ENCODE measurements at regions of chr3 and their contacts with region 1.

Region 1: GRCh38 chr3:113514265-113514769 is 639 bp downstream of the SPICE1 start:
- DNase-seq: no peak
- ATAC-seq: peak; percentile 9
- H3K4me3 ChIP-seq: peak overlapping the region; percentile 87
- H3K27ac ChIP-seq: peak overlapping the region; percentile 76
- H3K4me1 ChIP-seq: peaks cover 12% of the 10 kb centered on the region
- H3K27me3 ChIP-seq: no peaks in the 10 kb centered on the region
- CTCF ChIP-seq: no peak
- EP300 ChIP-seq: 0 out of 4 replicates have a peak, but pooled peaks of 1 of the 2 experiments have one; percentile 35
- POLR2A ChIP-seq: no peak
- RAD21 ChIP-seq: no peak

Region 2: DNA sequence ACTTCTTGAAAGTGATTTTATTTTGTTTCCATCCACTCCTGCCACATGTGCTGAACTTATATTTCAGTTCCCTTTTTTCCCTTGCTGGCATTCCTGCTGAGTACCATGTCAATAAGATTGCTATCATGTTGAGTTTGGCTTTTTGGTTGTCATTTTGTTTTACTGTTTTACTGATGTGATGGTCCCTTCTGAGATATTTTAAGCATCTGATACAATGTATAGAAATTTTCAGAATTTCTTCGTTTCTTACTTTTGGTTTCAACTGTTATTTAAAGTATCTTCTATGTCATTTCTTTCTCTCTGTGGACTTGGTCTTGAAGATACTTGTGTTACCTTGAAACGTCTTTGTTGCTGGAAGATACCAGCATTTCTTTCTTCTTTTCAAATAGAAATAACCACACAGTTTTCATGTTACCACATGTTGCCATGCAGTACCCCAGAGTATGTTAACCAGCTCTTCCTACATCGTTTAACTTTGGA is 32.1 kb after region 1 on chr3:
- CTCF ChIA-PET with region 1: interaction called, 11 read pairs
- POLR2A ChIA-PET with region 1: interaction called, 13 read pairs
- RAD21 ChIA-PET with region 1: interaction called, 11 read pairs
- SMC1A ChIA-PET with region 1: interaction called, 10 read pairs
- in situ Hi-C with region 1: no loop called
- intact Hi-C with region 1: no loop called
- DNase-seq: peak; percentile 57
- ATAC-seq: peak; percentile 88
- H3K4me3 ChIP-seq: peak overlapping the region; percentile 52; the same call in 1 of the 2 replicates
- H3K27ac ChIP-seq: peak overlapping the region; percentile 76
- H3K4me1 ChIP-seq: peaks cover 26% of the 10 kb centered on the region
- H3K27me3 ChIP-seq: no peaks in the 10 kb centered on the region
- CTCF ChIP-seq: no peak
- EP300 ChIP-seq: 0 out of 4 replicates have a peak, but pooled peaks of 1 of the 2 experiments have one; percentile 39
- POLR2A ChIP-seq: no peak
- RAD21 ChIP-seq: no peak

Region 3: DNA sequence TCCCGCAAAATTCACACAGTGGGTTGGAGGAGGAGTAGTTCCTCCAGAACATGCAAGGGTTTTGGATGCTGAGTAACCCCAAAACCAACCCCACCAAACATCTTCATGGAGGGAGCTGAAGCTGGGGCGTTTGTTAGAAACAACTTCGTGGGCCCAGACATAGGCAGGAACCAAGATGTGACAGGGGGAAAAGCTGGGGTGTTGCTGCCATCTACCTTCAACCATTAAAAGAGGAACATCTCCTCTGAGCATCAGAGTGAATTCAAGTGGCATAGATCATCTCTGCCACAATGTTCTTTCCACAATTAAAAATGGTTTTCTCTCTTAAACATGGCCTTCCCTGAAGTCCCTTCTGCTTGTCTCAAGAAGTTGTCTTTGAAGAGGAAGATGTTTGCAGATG is 38.5 kb after region 1 on chr3:
- CTCF ChIA-PET with region 1: interaction called, 28 read pairs
- POLR2A ChIA-PET with region 1: interaction called, 13 read pairs
- RAD21 ChIA-PET with region 1: interaction called, 5 read pairs
- SMC1A ChIA-PET with region 1: interaction called, 15 read pairs
- in situ Hi-C with region 1: no loop called
- intact Hi-C with region 1: no loop called
- DNase-seq: no peak
- ATAC-seq: peak; percentile 85
- H3K4me3 ChIP-seq: no peak overlapping the region
- H3K27ac ChIP-seq: no peak overlapping the region; the same call in 1 of the 2 replicates
- H3K4me1 ChIP-seq: peaks cover 4% of the 10 kb centered on the region
- H3K27me3 ChIP-seq: no peaks in the 10 kb centered on the region
- CTCF ChIP-seq: peak in 2 of 3 experiments; percentile 24 to 67; a peak in 3 of 6 replicates
- EP300 ChIP-seq: no peak
- POLR2A ChIP-seq: no peak
- RAD21 ChIP-seq: peak; percentile 80

Region 4: GRCh38 chr3:113560831-113561623 is 46.7 kb after region 1 on chr3:
- CTCF ChIA-PET with region 1: interaction called, 4 read pairs
- POLR2A ChIA-PET with region 1: interaction called, 11 read pairs
- RAD21 ChIA-PET with region 1: interaction called, 3 read pairs
- SMC1A ChIA-PET with region 1: interaction called, 15 read pairs
- in situ Hi-C with region 1: no loop called
- intact Hi-C with region 1: no loop called
- DNase-seq: no peak
- ATAC-seq: no peak
- H3K4me3 ChIP-seq: no peak overlapping the region
- H3K27ac ChIP-seq: no peak overlapping the region
- H3K4me1 ChIP-seq: no peaks in the 10 kb centered on the region; the same call in 1 of the 2 replicates
- H3K27me3 ChIP-seq: no peaks in the 10 kb centered on the region
- CTCF ChIP-seq: no peak
- EP300 ChIP-seq: no peak
- POLR2A ChIP-seq: no peak
- RAD21 ChIP-seq: no peak

Measured in GM12878 (cell line).